ENCODE measurements at regions of chr12 and their contacts with region 1.

Region 1: GRCh38 chr12:9961106-9961505 is 10.1 kb upstream of the CLEC12A start:
- DNase-seq: no peak
- ATAC-seq: no peak
- H3K4me3 ChIP-seq: no peak overlapping the region
- H3K4me3 Mint-ChIP-seq: peak overlapping the region in 1 of 10 donors; percentile 24
- H3K27ac ChIP-seq: no peak overlapping the region
- H3K27ac Mint-ChIP-seq: peak overlapping the region in 1 of 9 donors; percentile 39
- H3K4me1 ChIP-seq: peaks cover 15 to 16% of the 10 kb centered on the region in 2 donors
- H3K4me1 Mint-ChIP-seq: peaks cover 26 to 42% (median 40%) of the 10 kb centered on the region in 7 donors
- H3K27me3 ChIP-seq: no peaks in the 10 kb centered on the region
- H3K27me3 Mint-ChIP-seq: no peaks in the 10 kb centered on the region

Region 2: DNA sequence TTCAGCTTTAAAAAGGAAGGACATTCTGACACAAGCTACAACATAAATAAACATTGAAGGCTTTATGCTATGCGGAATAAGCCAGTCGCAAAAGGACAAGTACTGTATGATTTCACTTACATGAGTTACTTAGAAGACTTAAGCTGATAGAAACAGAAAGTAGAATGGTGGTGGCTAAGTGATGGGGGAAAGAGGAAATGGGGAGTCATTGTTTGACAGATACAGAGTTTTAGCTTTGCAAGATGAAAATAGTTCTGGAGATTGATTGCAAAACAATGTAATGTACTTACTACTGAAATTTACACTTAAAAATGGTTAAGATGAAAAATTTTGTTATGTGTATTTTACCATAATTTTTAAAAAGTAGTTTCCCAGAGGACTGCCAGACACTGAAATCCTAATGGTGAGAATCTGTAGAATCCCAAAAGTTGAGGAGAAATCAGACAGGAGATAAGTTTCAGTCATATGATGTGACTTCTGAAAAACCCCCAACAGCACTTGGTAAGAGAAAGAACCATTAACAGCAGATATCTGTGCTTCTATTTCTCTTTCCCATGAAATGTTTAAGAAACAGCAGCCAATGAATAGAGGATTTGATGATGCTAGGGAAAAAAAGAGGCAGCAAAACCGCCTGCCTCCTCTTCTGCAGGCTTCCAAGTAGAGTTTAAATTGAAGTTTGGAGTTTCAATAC is 12.4 kb before region 1 on chr12:
- CTCF ChIA-PET with region 1: no interaction called
- POLR2A ChIA-PET with region 1: no interaction called
- intact Hi-C with region 1: loop called (anchors 1 kb)
- DNase-seq: peak in 5 of 9 donors; percentile 22 to 36 (median 26)
- ATAC-seq: peak; percentile 80
- H3K4me3 ChIP-seq: no peak overlapping the region
- H3K4me3 Mint-ChIP-seq: peak overlapping the region in 8 of 10 donors; percentile 0 to 53 (median 14)
- H3K27ac ChIP-seq: no peak overlapping the region
- H3K27ac Mint-ChIP-seq: peak overlapping the region; percentile 0 to 74 (median 2)
- H3K4me1 ChIP-seq: peaks cover 27 to 29% of the 10 kb centered on the region in 2 donors
- H3K4me1 Mint-ChIP-seq: peaks cover 40 to 61% (median 43%) of the 10 kb centered on the region in 7 donors
- H3K27me3 ChIP-seq: no peaks in the 10 kb centered on the region
- H3K27me3 Mint-ChIP-seq: no peaks in the 10 kb centered on the region

Measured in naive thymus-derived CD4-positive, alpha-beta T cell (primary cell).